BJ (cell line): ENCODE measurements at regions of chr17 and their contacts with region 1.

Region 1: GRCh38 chr17:1331708-1332107 is 52.2 kb downstream of the TRARG1 start:
- DNase-seq: no peak
- H3K4me3 ChIP-seq: no peak overlapping the region
- H3K27me3 ChIP-seq: no peaks in the 10 kb centered on the region
- CTCF ChIP-seq: no peak

Region 2: GRCh38 chr17:1147661-1148060 is 184.0 kb before region 1 on chr17:
- CTCF ChIA-PET with region 1: no interaction called
- POLR2A ChIA-PET with region 1: no interaction called
- DNase-seq: no peak
- H3K4me3 ChIP-seq: no peak overlapping the region
- H3K27me3 ChIP-seq: no peaks in the 10 kb centered on the region
- CTCF ChIP-seq: peak; percentile 41

Region 3: GRCh38 chr17:1260086-1260769 is 71.5 kb before region 1 on chr17:
- CTCF ChIA-PET with region 1: interaction called, 20 read pairs
- POLR2A ChIA-PET with region 1: no interaction called
- DNase-seq: no peak
- H3K4me3 ChIP-seq: peak overlapping the region; percentile 56
- H3K27me3 ChIP-seq: peaks cover 3% of the 10 kb centered on the region; the same call in 1 of the 2 replicates
- CTCF ChIP-seq: no peak

Region 4: GRCh38 chr17:1289695-1290094 is 42.0 kb before region 1 on chr17:
- CTCF ChIA-PET with region 1: no interaction called
- POLR2A ChIA-PET with region 1: no interaction called
- DNase-seq: no peak
- H3K4me3 ChIP-seq: no peak overlapping the region
- H3K27me3 ChIP-seq: no peaks in the 10 kb centered on the region
- CTCF ChIP-seq: no peak